ENCODE measurements at regions of chr6 and their contacts with region 1.

Region 1: DNA sequence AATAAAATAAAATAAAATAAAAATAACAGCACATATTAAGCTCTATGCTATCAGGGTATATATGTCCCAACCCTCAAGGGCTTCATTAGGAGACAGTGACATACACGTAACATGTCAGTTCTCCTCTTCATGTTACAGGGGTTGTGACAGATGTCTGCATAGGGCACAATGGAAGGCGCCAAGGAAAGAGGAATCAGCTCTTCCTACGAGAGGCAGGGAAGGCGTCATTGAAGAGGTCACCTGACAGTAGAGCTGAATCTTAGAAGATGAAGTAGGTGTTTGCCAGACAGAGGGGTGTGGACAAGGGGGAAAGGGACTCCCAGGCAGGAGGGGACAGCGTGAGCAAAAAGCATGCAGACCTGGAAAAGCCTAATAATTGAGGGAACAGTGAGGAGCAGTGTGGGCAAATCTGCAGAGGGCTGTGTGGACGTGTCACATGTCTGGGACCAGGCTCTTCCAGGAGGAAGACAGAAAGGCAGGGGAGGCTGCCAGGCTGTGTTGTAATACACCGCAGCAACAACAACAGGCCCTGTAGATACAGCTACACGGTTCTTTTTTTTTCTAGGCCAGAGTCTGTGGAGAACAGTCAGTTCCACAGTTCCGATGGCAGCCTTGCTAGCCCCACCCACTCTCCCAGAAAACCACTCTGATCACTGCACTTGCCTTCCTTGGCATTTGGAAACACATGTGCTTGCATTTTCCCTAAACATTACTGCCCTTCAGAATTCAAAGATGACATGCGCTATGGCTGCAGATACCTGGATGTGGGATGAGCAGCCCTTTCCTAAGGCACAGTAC is 2.5 kb upstream of the FKBP5 start:
- DNase-seq: peak; percentile 31 to 89 (median 58)

Region 2: DNA sequence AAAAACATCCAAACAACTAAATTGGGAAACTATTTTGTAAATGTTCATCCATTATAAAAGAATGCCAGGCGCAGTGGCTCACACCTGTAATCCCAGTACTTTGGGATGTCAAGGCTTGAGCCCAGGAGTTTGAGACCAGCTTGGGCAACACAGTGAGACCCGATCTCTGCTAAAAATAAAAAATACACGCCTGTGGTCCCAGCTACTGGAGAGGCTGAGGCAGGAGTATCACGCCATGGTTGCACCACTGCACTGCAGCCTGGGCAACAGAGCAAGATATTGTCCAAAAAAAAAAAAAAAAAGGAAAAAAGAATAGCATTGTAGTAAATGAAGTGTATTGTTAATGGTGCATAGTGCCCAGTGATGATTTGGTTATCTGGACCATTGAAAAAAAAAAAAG is 41.2 kb before region 1 on chr6:
- intact Hi-C with region 1: no loop called
- DNase-seq: peak in 2 of 42 donors; percentile 22 to 50

Region 3: GRCh38 chr6:35727935-35728682 is 36.9 kb after region 1 on chr6:
- intact Hi-C with region 1: loop called (anchors 5 kb)
- DNase-seq: peak; percentile 81 to 97 (median 91)

Region 4: DNA sequence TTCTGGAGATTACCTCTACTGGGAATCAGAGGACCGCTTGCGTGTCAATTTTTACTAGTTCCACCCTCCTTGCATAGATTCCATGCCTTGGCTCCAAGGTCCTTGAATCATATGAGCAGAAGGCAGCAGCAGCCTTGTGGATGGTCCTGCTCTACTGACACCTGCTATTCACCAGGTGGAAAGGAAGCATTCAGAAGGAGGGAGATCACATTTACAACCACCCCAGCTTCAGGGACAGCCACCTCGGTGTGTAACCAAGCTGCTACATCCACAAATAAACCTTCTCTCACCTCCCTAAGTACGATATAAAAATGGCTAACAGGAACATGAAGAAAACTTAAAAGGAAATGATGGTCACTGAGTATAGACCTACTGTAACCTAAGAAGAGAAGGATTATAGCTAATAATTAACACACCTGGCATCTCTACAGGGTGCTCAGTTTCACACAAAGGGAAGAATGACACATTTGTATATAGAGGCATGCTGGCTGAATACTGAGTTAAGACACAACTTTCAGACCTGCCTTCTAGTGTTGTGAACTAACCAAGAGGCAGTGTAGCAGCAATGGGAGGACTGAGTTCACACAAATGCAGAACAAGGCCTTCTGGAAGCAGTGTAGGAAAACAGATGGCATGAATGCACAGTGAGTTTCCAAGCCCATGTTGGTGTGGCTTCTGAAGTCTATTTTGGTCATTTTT is 276.0 kb after region 1 on chr6:
- intact Hi-C with region 1: no loop called
- DNase-seq: no peak

Measured in head of caudate nucleus (tissue), 42 donors.